Activated CD8-positive, alpha-beta T cell treated with anti-CD3 and anti-CD28 coated beads, Interleukin-2, amount 10 ng/mL, durations not matched to agents 7 days and 5 days (primary cell): ENCODE measurements at regions of chr17 and their contacts with region 1.

Region 1: DNA sequence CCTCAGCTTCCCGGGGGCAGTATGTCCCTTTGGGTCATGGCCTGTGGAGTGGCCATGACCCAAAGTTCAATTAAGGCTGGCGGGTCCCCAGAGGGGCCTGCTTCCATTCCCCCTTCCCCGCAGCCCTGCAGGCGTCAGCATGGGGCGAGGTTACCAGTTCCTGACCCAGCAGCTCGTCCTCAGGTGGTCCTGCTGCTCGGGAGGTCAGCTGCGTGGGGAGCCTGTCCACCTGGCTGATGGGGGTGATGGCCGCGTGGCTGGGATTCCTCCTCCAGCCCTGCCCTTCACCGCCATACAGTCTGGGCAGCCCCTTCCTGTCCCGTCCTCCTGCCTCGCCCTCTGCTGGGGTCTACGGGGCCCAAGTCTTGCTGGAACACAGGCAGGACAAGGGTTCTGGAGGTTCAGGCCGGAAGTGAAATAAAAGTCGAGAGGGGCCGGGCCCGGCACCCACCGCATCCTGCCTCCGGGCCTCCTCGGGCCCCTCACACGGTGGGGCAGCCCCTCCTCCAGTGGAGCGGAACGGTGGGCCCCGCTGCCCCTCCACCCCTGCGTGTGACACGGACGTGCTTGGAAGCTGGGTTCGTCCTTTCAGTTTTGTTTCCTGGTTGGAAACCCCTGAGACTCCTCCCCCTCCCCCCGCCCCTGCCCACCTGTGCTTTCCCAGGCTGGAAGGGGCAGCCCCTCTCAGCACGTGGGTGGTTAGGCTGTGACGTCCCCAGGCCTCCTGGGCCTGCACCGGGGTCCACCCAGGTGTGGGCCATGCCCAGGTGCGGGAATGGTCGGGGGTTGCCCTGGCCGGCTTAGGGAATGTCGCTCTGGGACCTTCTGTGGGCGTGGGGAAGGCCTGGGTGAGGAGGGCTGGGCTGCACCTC is 6.8 kb downstream of the UBALD2 start:
- DNase-seq: peak; percentile 90
- ATAC-seq: peak; percentile 39
- H3K4me3 Mint-ChIP-seq: peak overlapping the region; percentile 84
- H3K27ac Mint-ChIP-seq: peak overlapping the region; percentile 99
- H3K4me1 Mint-ChIP-seq: peaks cover 66% of the 10 kb centered on the region
- H3K27me3 Mint-ChIP-seq: no peaks in the 10 kb centered on the region

Region 2: DNA sequence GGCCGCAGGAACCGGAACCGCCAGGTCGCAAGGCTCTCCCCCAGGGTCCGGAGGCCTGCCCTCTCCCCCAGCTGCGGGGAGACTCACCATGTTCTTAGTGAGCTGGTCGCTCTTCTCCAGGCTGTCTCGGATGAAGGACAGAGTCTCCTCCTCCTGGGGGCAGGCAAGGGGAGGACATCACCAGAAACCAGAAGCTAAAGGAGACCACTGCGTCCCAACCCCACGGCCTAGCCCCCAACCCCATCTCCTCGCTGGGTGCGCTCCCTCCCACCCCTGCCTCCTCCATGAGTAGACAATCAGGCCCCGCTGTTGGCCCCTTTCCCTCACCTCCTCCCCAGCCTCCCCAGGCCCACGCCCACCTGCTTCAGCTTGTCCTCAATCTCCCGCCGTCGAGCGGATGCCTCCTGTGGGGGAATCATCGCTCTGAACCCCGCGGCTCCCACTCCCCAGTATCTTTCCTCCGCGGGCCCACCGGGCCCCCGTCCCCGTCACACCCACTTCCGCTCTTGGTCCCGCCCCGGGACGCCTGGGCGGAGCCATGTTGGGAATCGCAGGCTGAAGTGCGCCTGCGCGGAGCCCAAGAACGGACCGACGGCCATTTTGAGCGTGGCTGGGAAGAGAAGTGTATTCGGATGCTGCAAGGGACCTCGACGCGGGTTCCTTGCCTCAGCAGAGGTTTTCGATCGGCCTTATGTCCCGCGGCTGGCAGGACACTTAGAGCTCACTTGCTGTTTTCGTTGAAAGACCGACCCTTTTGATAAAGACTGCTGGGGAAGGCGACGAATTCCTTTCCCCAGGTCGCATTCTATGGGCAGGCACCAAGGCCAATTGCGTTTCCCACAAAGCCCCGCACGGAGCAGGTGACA is 168.4 kb before region 1 on chr17 and contains the start of gene EXOC7:
- CTCF ChIA-PET with region 1: interaction called, 3 read pairs
- POLR2A ChIA-PET with region 1: interaction called, 18 read pairs
- DNase-seq: peak; percentile 94
- ATAC-seq: peak; percentile 90
- H3K4me3 Mint-ChIP-seq: peak within 1 kb of the TSS; percentile 97
- H3K27ac Mint-ChIP-seq: peak within 1 kb of the TSS; percentile 98
- H3K4me1 Mint-ChIP-seq: peaks cover 30% of the 10 kb centered on the region
- H3K27me3 Mint-ChIP-seq: no peaks in the 10 kb centered on the region
- total RNA-seq, gene EXOC7: 126 to 129 TPM

Region 3: GRCh38 chr17:76208120-76208519 is 63.8 kb before region 1 on chr17:
- CTCF ChIA-PET with region 1: interaction called, 6 read pairs
- POLR2A ChIA-PET with region 1: interaction called, 20 read pairs
- DNase-seq: peak; percentile 50
- ATAC-seq: peak; percentile 67
- H3K4me3 Mint-ChIP-seq: peak overlapping the region; percentile 15
- H3K27ac Mint-ChIP-seq: peak overlapping the region; percentile 74
- H3K4me1 Mint-ChIP-seq: peaks cover 75% of the 10 kb centered on the region
- H3K27me3 Mint-ChIP-seq: no peaks in the 10 kb centered on the region

Region 4: DNA sequence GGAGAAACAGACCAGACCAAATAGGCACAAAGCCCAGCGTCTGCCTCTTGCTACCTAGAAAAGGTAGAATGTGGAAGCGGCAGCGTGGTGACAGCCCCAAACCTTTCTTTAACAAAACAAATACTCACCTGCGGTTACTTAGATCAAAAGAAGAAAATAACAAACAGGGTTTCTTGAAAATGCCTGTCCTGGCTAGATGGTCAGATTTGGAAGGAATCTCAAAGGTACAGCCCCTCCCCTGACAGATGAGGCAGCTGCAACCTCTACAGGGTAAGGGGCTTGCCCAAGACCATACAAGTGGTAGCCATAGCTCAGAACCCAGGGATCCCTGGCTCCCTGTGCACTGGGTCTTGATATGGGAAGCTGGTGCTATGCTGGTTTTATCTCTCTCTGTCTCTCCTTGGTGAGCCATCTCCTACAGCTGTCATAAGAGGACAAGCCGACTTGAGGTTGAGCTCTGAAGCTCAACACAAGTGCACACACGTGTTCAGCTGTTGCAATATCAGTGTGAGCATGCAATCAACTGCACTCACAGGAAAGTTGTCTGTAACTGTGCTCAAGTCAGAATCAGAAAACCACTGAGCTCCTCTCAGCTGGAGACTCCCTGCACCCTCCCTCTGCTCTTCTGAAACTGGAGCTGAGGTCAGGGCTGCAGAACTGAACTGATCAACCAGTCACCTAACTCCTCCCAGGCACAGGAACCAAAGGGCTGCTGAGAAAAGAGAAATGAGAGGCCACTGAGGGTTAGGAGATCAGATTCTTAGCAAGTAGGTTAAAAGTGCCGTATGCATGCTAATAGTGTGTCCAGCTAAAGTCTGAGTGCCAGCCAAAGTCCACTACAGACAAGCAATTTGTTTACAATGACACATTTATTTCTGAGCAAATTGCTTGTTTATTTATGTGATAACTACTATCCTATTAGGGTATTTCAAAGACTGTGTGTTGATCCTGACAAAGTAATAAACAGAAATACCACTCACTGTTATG is 25.5 kb before region 1 on chr17:
- CTCF ChIA-PET with region 1: interaction called, 16 read pairs
- POLR2A ChIA-PET with region 1: interaction called, 807 read pairs
- DNase-seq: peak; percentile 91
- ATAC-seq: peak; percentile 97
- H3K4me3 Mint-ChIP-seq: peak overlapping the region; percentile 62
- H3K27ac Mint-ChIP-seq: peak overlapping the region; percentile 91
- H3K4me1 Mint-ChIP-seq: peaks cover 84% of the 10 kb centered on the region
- H3K27me3 Mint-ChIP-seq: no peaks in the 10 kb centered on the region

Region 5: DNA sequence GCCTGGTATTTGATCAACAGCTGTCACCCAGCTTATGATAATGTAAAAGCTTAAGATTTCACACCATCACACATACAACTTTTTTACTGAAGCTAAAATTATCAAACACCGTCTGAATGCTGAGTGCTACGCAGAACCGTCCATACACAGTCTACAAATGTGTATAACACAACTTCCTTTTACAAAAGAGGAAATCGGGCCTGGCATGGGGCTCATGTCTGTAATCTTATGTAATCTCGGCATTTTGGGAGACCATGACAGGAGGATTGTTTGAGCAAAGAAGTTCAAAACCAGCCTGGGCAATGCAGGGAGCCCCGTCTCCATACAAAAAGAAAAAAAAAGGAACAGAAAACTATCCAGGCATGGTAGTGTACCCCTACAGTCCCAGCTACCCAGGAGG is 55.8 kb after region 1 on chr17:
- CTCF ChIA-PET with region 1: no interaction called
- POLR2A ChIA-PET with region 1: no interaction called
- DNase-seq: no peak
- ATAC-seq: no peak
- H3K4me3 Mint-ChIP-seq: no peak overlapping the region
- H3K27ac Mint-ChIP-seq: no peak overlapping the region
- H3K4me1 Mint-ChIP-seq: no peaks in the 10 kb centered on the region
- H3K27me3 Mint-ChIP-seq: no peaks in the 10 kb centered on the region

Region 6: GRCh38 chr17:76391200-76391715 is 119.4 kb after region 1 on chr17:
- CTCF ChIA-PET with region 1: no interaction called
- POLR2A ChIA-PET with region 1: no interaction called
- DNase-seq: no peak
- ATAC-seq: no peak
- H3K4me3 Mint-ChIP-seq: no peak overlapping the region
- H3K27ac Mint-ChIP-seq: no peak overlapping the region
- H3K4me1 Mint-ChIP-seq: peaks cover 9% of the 10 kb centered on the region
- H3K27me3 Mint-ChIP-seq: no peaks in the 10 kb centered on the region